ENCODE measurements at regions of chr7 and their contacts with region 1.

Region 1: DNA sequence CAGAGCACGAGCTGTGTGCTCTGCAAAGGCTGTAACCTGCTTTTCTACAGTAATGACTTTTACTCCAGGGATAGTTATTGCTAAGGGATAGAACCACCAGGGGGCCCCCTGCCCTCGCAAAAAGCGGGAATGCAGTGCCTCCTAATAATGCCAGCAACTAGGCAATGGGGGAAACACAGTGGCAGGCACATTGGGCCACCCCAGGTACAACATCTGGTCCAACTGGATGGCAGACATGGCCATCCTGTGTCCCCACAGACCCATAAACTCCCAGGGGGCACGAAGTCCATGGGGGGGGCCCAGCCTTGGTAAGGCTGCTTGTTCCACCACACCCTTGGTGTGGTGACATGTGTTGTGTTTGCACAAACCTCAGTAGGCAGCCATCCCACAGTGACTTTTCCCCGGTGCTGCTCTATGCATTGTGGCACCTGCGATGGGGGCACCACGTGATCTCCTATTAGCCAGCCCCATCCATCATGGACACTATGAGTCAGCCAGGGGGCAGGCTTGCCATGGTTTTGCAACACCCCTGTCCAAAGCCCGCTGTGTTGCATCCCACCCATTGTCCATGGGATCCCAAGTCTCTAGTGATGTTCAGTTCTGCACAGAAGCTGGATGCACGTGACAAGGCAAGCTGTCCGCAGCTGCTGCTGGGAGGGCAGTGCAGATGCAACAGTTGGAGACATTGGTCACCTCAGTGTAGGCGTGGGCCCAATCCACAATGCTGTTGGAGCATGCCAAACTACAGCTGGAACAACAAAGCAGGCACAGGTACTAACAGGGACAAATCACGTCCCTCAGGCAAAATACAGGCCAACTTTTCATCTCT is 84.0 kb downstream of the ANLN start:
- DNase-seq: peak in 1 of 2 experiments; percentile 50
- H3K4me3 ChIP-seq: no peak overlapping the region
- H3K27ac ChIP-seq: no peak overlapping the region
- H3K4me1 ChIP-seq: no peaks in the 10 kb centered on the region
- H3K27me3 ChIP-seq: no peaks in the 10 kb centered on the region; the same call in 1 of the 2 replicates
- CTCF ChIP-seq: peak; percentile 75

Region 2: GRCh38 chr7:36670585-36671431 is 197.1 kb after region 1 on chr7:
- CTCF ChIA-PET with region 1: interaction called, 4 read pairs
- POLR2A ChIA-PET with region 1: no interaction called
- intact Hi-C with region 1: loop called (anchors 1 kb)
- DNase-seq: peak in 1 of 2 experiments; percentile 55
- H3K4me3 ChIP-seq: no peak overlapping the region
- H3K27ac ChIP-seq: no peak overlapping the region
- H3K4me1 ChIP-seq: no peaks in the 10 kb centered on the region
- H3K27me3 ChIP-seq: peaks cover 28% of the 10 kb centered on the region
- CTCF ChIP-seq: peak; percentile 95

Region 3: GRCh38 chr7:36911788-36912187 is 438.1 kb after region 1 on chr7:
- CTCF ChIA-PET with region 1: no interaction called
- POLR2A ChIA-PET with region 1: no interaction called
- intact Hi-C with region 1: no loop called
- DNase-seq: no peak
- H3K4me3 ChIP-seq: no peak overlapping the region
- H3K27ac ChIP-seq: no peak overlapping the region
- H3K4me1 ChIP-seq: no peaks in the 10 kb centered on the region
- H3K27me3 ChIP-seq: 0 out of 2 replicates have a peak, but pooled peaks cover 22% of the 10 kb centered on the region
- CTCF ChIP-seq: no peak

Region 4: DNA sequence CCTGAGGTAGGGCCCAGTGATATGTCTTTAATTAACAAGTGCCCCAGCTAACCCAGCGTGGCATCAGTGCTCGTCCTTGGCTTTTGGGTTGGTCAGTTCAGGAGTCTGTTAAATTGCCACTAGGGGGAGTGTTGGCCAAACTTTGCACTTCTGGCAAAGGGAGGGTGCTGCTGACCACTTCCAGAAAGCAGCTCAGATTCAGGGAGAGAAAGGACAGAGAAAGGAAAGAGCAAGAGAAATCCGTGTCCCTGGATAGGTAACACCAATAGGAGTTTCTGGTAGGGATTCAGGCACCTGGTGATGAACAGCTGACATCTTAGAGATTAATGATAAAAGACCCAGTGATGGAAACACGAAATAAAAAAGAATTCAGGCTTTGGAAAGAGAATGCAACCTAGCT is 493.7 kb after region 1 on chr7:
- CTCF ChIA-PET with region 1: no interaction called
- POLR2A ChIA-PET with region 1: no interaction called
- intact Hi-C with region 1: loop called (anchors 5 kb)
- DNase-seq: peak; percentile 48 to 55
- H3K4me3 ChIP-seq: no peak overlapping the region
- H3K27ac ChIP-seq: no peak overlapping the region
- H3K4me1 ChIP-seq: no peaks in the 10 kb centered on the region
- H3K27me3 ChIP-seq: peaks cover 17% of the 10 kb centered on the region; the same call in 1 of the 2 replicates
- CTCF ChIP-seq: peak; percentile 96

Measured in PC-9 (cell line).